ENCODE measurements at regions of chr20 and their contacts with region 1.

Region 1: GRCh38 chr20:48760403-48760983 is 67.3 kb downstream of the PREX1 start:
- DNase-seq: peak; percentile 39 to 95 (median 68)
- ATAC-seq: peak; percentile 82
- H3K4me3 ChIP-seq: peak overlapping the region; percentile 18
- H3K4me3 Mint-ChIP-seq: peak overlapping the region; percentile 46
- H3K27ac ChIP-seq: peak overlapping the region; percentile 68 to 86
- H3K27ac Mint-ChIP-seq: peak overlapping the region; percentile 92
- H3K4me1 ChIP-seq: peaks cover 82% of the 10 kb centered on the region
- H3K4me1 Mint-ChIP-seq: peaks cover 74% of the 10 kb centered on the region
- H3K27me3 ChIP-seq: no peaks in the 10 kb centered on the region
- H3K27me3 Mint-ChIP-seq: no peaks in the 10 kb centered on the region
- CTCF ChIP-seq: no peak

Region 2: GRCh38 chr20:48783533-48784272 is 23.2 kb after region 1 on chr20:
- CTCF ChIA-PET with region 1: no interaction called
- POLR2A ChIA-PET with region 1: no interaction called
- intact Hi-C with region 1: loop called in 1 of 2 experiments (anchors 1 kb)
- DNase-seq: peak in 5 of 14 experiments; percentile 24 to 75 (median 70)
- ATAC-seq: peak; percentile 76
- H3K4me3 ChIP-seq: no peak overlapping the region
- H3K4me3 Mint-ChIP-seq: no peak overlapping the region
- H3K27ac ChIP-seq: peak overlapping the region in 1 of 2 donors; percentile 73
- H3K27ac Mint-ChIP-seq: no peak overlapping the region
- H3K4me1 ChIP-seq: peaks cover 74% of the 10 kb centered on the region
- H3K4me1 Mint-ChIP-seq: peaks cover 39% of the 10 kb centered on the region
- H3K27me3 ChIP-seq: no peaks in the 10 kb centered on the region
- H3K27me3 Mint-ChIP-seq: no peaks in the 10 kb centered on the region
- CTCF ChIP-seq: no peak

Region 3: GRCh38 chr20:48818407-48818987 is 58.0 kb after region 1 on chr20:
- CTCF ChIA-PET with region 1: interaction called, 3 read pairs
- POLR2A ChIA-PET with region 1: interaction called, 4 read pairs
- intact Hi-C with region 1: loop called (anchors 2 to 5 kb)
- DNase-seq: peak in 11 of 14 experiments; percentile 24 to 86 (median 32)
- ATAC-seq: peak; percentile 73
- H3K4me3 ChIP-seq: peak overlapping the region; percentile 73
- H3K4me3 Mint-ChIP-seq: peak overlapping the region; percentile 97
- H3K27ac ChIP-seq: peak overlapping the region; percentile 67 to 72
- H3K27ac Mint-ChIP-seq: no peak overlapping the region
- H3K4me1 ChIP-seq: peaks cover 95% of the 10 kb centered on the region
- H3K4me1 Mint-ChIP-seq: peaks cover 72% of the 10 kb centered on the region
- H3K27me3 ChIP-seq: no peaks in the 10 kb centered on the region
- H3K27me3 Mint-ChIP-seq: no peaks in the 10 kb centered on the region
- CTCF ChIP-seq: no peak

Region 4: GRCh38 chr20:49037962-49038387 is 277.5 kb after region 1 on chr20:
- CTCF ChIA-PET with region 1: no interaction called
- POLR2A ChIA-PET with region 1: no interaction called
- intact Hi-C with region 1: no loop called
- DNase-seq: peak in 5 of 14 experiments; percentile 4 to 58 (median 48)
- ATAC-seq: peak; percentile 71
- H3K4me3 ChIP-seq: no peak overlapping the region
- H3K4me3 Mint-ChIP-seq: peak overlapping the region; percentile 63
- H3K27ac ChIP-seq: no peak overlapping the region
- H3K27ac Mint-ChIP-seq: peak overlapping the region; percentile 28
- H3K4me1 ChIP-seq: peaks cover 23% of the 10 kb centered on the region
- H3K4me1 Mint-ChIP-seq: peaks cover 20% of the 10 kb centered on the region
- H3K27me3 ChIP-seq: no peaks in the 10 kb centered on the region
- H3K27me3 Mint-ChIP-seq: no peaks in the 10 kb centered on the region
- CTCF ChIP-seq: no peak

Region 5: GRCh38 chr20:49775229-49775693 is 1014.8 kb after region 1 on chr20:
- CTCF ChIA-PET with region 1: no interaction called
- POLR2A ChIA-PET with region 1: no interaction called
- intact Hi-C with region 1: no loop called
- DNase-seq: peak in 2 of 14 experiments; percentile 39 to 52
- ATAC-seq: no peak
- H3K4me3 ChIP-seq: no peak overlapping the region
- H3K4me3 Mint-ChIP-seq: no peak overlapping the region
- H3K27ac ChIP-seq: no peak overlapping the region
- H3K27ac Mint-ChIP-seq: no peak overlapping the region
- H3K4me1 ChIP-seq: peaks cover 9% of the 10 kb centered on the region
- H3K4me1 Mint-ChIP-seq: peaks cover 7% of the 10 kb centered on the region
- H3K27me3 ChIP-seq: peaks cover 13 to 16% of the 10 kb centered on the region in 2 experiments
- H3K27me3 Mint-ChIP-seq: peaks cover 58% of the 10 kb centered on the region
- CTCF ChIP-seq: no peak

Measured in CD4-positive, alpha-beta T cell (primary cell).